ENCODE measurements at regions of chr9 and their contacts with region 1.

Region 1: DNA sequence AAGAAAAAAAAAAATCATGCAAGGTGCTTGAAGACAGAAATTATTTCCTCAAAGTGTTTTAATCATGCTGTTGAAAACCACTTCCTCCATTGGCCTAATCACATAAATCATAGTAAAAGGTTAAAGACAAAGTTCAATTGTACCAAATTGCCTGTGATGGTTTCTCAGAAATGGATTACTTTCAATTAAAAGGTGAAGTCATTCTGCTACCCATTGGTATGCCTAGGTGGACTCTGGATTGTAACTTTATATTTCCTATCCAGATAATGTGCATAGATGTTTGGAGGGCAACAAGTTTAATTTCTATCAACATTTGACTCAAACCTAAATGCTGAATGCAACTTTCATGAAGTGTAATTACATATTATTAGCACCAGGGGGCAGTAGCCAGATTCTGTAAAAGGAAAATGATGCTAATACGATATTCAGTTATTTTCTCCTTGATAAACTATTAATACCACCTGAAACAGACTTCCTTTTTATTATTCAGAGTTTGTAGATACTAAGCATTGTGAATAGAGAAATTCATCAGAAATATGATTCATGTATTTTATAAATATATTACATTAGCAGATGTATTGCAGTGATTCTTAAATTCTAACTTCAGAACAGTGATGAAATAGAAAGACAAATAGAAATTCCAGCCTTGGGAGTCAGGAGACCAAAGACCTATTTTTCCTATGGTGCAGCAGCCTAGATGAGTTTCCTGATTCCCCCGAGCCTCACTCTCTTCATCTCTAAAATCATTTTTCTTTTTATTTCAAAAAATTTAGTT is 148.2 kb downstream of the CAAP1 start:
- DNase-seq: no peak
- CTCF ChIP-seq: no peak

Region 2: GRCh38 chr9:26863074-26863473 is 118.7 kb after region 1 on chr9:
- in situ Hi-C with region 1: loop called (anchors 10 kb)
- DNase-seq: no peak
- CTCF ChIP-seq: no peak

Measured in GM13976 (cell line).